Right ventricle myocardium inferior (tissue), 1 donor: ENCODE measurements at regions of chr4 and their contacts with region 1.

Region 1: DNA sequence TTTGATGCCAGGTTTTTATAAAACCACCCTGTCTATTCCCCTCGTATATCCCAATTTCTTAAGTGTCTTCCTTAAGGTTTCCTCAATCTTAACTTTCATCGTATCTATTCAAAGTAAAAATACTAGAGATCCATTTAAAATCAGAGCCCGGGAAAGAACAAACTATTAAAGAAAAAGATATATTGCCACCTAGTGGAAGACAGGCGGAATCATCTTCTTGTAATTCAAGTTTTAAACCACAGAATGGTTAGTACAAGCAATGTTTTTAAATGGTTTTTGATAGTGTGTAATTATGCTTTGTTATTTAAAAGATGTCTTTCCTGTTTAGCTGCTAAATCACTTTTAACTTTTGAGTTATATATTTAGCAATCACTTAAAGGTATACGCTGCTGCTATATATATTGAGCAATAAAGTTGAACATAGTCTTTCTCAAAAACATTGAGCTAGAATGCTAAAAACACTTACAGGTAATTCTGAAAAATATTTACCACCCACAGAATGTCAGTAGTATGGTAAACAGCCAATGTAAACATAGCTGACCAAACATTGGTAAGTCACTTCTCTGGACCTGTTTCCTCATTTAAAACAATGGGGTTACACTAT is 18.2 kb downstream of the PRDM8 start:
- DNase-seq: no peak
- ATAC-seq: no peak

Region 2: DNA sequence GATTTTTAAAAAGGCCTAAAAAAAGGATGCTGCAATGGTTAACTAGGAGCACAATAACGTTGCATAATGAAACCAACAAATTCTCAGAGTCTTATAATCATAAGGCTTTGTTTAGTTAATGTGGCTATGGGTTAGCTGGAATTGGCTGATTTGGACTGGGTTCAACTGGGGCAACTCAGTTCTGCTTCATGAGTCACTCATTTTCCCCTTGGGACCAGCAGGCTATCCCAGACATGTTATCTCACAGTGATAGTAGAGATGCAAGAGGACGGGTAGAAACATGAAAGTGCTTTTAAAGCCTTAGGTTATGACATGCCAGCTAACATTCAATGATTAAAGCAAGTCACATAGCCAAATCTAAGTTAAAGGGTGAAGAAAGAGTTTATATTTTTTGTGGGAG is 618.3 kb before region 1 on chr4:
- intact Hi-C with region 1: loop called (anchors 10 kb)
- DNase-seq: no peak
- ATAC-seq: no peak

Region 3: DNA sequence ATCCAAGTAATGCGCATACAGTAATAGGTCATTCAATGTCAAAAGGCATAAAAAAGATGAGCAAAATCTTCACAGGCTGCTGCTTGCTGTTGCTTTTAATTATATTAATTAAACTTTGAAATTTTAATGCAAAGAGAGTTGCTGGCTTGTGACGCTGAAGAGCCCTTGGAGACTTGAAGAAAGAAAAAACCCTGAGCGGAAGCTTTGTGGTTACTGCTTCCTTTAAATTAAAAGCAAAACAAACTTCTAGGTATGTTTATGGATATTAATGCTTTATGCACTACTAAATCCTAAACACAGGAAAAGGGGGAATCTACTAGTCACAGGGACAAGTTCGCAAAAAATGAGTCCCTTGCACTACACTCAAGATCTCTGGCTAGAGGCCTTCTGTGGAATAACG is 309.2 kb before region 1 on chr4:
- intact Hi-C with region 1: no loop called
- DNase-seq: no peak
- ATAC-seq: no peak

Region 4: GRCh38 chr4:80184053-80184790 is 31.3 kb before region 1 on chr4:
- intact Hi-C with region 1: loop called (anchors 5 kb)
- DNase-seq: peak; percentile 95
- ATAC-seq: peak; percentile 98